PC-9 (cell line): ENCODE measurements at regions of chr20 and their contacts with region 1.

Region 1: DNA sequence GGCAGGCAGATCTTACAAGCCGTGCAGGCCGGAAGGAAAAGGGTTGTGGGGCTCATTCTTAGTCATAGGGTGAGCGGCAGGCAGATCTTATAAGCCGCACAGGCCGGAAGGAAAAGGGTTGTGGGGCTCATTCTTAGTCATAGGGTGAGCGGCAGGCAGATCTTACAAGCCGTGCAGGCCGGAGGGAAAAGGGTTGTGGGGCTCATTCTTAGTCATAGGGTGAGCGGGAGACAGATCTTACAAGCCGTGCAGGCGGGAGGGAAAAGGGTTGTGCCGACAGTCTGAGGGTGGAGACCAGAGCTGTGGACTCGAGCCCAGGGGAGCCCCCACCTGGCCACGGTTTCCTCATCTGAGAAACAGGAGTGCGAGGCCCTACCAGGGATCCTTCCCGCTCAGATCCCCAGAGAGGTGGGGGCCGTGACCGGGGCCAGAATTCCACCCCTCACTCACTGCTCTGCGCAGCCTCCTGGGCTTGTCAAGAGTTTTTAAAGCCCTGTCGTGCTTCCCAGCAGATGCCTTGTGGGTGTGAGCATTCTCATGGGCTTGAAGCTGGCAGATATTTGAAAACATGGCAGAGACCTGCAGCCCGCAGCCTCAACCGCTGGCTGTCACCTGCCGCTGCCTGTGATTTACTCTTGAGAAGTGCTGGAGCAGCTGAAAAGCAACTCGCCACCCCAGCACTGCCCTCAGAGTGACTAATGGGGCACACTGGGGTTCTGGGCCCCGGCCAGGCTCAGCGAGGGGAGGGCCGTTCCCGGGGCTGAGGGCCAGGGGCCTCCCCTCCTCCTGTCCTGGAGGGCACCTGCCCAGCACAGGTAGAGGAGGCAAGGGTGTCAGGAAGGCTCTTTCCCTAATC is 31.9 kb downstream of the NTSR1 start:
- DNase-seq: peak; percentile 82 to 96
- H3K4me3 ChIP-seq: peak overlapping the region; percentile 46; the same call in 1 of the 2 replicates
- H3K27ac ChIP-seq: peak overlapping the region; percentile 86
- H3K4me1 ChIP-seq: peaks cover 36% of the 10 kb centered on the region
- H3K27me3 ChIP-seq: no peaks in the 10 kb centered on the region
- CTCF ChIP-seq: no peak; the same call in 1 of the 2 replicates

Region 2: GRCh38 chr20:62704301-62704948 is 36.1 kb before region 1 on chr20:
- CTCF ChIA-PET with region 1: interaction called, 3 read pairs
- POLR2A ChIA-PET with region 1: no interaction called
- intact Hi-C with region 1: loop called (anchors 5 kb)
- DNase-seq: peak; percentile 93 to 98
- H3K4me3 ChIP-seq: peak overlapping the region; percentile 32; the same call in 1 of the 2 replicates
- H3K27ac ChIP-seq: peak overlapping the region; percentile 81
- H3K4me1 ChIP-seq: peaks cover 40% of the 10 kb centered on the region
- H3K27me3 ChIP-seq: no peaks in the 10 kb centered on the region
- CTCF ChIP-seq: no peak

Region 3: GRCh38 chr20:62766714-62767113 is 26.2 kb after region 1 on chr20:
- CTCF ChIA-PET with region 1: no interaction called
- POLR2A ChIA-PET with region 1: interaction called, 3 read pairs
- intact Hi-C with region 1: loop called (anchors 2 kb)
- DNase-seq: peak; percentile 78 to 85
- H3K4me3 ChIP-seq: peak overlapping the region; percentile 10; the same call in 1 of the 2 replicates
- H3K27ac ChIP-seq: no peak overlapping the region
- H3K4me1 ChIP-seq: peaks cover 39% of the 10 kb centered on the region
- H3K27me3 ChIP-seq: 0 out of 2 replicates have a peak, but pooled peaks cover 5% of the 10 kb centered on the region
- CTCF ChIP-seq: no peak

Region 4: GRCh38 chr20:62937366-62938104 is 197.0 kb after region 1 on chr20:
- CTCF ChIA-PET with region 1: no interaction called
- POLR2A ChIA-PET with region 1: no interaction called
- intact Hi-C with region 1: no loop called
- DNase-seq: peak; percentile 87 to 98
- H3K4me3 ChIP-seq: peak overlapping the region; percentile 99
- H3K27ac ChIP-seq: peak overlapping the region; percentile 67
- H3K4me1 ChIP-seq: peaks cover 19% of the 10 kb centered on the region
- H3K27me3 ChIP-seq: no peaks in the 10 kb centered on the region
- CTCF ChIP-seq: no peak